Heart right ventricle (tissue), 16 donors: ENCODE measurements at regions of chr4 and their contacts with region 1.

Region 1: DNA sequence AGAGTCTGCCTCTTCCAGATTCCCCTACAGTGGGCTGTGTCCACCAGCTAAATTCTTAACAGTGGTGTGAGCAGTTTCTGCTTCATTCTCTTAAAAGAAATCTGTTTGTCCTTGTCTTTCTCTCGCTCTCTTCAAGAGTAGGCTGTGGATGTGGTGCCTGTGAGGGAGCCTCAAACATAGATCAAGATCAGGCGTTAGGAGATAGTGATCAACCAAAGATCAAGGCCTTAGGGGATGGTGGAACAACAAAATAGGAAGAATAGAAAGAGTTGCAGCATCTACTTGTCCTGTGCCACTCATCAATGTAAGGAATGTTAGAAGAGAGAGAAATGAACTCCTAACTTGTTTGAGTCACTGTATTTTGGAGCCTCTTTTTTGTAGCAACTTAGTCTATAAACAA is 144.2 kb downstream of the AASDH start:
- DNase-seq: no peak
- ATAC-seq: no peak
- H3K4me3 ChIP-seq: no peak overlapping the region
- H3K27ac ChIP-seq: no peak overlapping the region
- H3K4me1 ChIP-seq: no peaks in the 10 kb centered on the region
- H3K27me3 ChIP-seq: peaks cover 0 to 2% (median 0%) of the 10 kb centered on the region in 7 donors
- CTCF ChIP-seq: no peak

Region 2: DNA sequence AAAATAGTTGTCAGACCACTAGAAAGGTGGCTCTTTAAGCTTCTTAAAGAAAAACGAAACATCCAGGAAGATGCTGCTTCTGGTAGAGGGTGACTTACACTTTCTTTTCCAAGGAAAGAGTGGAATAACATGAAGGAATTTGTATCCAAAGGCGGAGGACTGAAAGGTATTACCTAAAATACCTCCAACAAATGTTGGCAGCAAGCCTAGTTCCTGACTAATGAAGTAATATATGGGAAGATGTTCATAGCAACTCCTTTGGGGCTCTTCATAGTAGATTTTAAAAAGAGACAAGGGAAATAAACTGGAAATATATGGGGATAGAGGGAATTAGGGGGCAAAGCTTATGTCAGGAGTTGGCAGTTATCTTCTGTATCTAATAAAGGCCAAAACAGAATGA is 28.0 kb after region 1 on chr4:
- intact Hi-C with region 1: loop called in 1 of 10 experiments (anchors 2 kb)
- DNase-seq: no peak
- ATAC-seq: no peak
- H3K4me3 ChIP-seq: no peak overlapping the region
- H3K27ac ChIP-seq: no peak overlapping the region
- H3K4me1 ChIP-seq: no peaks in the 10 kb centered on the region
- H3K27me3 ChIP-seq: peaks cover 0 to 20% (median 0%) of the 10 kb centered on the region in 7 donors
- CTCF ChIP-seq: no peak